A673 (cell line): ENCODE measurements at regions of chr17 and their contacts with region 1.

Region 1: GRCh38 chr17:17237026-17237799 is at the start of gene FLCN:
- DNase-seq: peak; percentile 91
- H3K4me3 ChIP-seq: peak within 1 kb of the TSS; percentile 91
- H3K27ac ChIP-seq: peak within 1 kb of the TSS; percentile 100
- H3K4me1 ChIP-seq: peaks cover 9% of the 10 kb centered on the region
- H3K27me3 ChIP-seq: no peaks in the 10 kb centered on the region
- CTCF ChIP-seq: no peak
- total RNA-seq, gene FLCN: 47.6 and 60.2 TPM in 2 replicates

Region 2: DNA sequence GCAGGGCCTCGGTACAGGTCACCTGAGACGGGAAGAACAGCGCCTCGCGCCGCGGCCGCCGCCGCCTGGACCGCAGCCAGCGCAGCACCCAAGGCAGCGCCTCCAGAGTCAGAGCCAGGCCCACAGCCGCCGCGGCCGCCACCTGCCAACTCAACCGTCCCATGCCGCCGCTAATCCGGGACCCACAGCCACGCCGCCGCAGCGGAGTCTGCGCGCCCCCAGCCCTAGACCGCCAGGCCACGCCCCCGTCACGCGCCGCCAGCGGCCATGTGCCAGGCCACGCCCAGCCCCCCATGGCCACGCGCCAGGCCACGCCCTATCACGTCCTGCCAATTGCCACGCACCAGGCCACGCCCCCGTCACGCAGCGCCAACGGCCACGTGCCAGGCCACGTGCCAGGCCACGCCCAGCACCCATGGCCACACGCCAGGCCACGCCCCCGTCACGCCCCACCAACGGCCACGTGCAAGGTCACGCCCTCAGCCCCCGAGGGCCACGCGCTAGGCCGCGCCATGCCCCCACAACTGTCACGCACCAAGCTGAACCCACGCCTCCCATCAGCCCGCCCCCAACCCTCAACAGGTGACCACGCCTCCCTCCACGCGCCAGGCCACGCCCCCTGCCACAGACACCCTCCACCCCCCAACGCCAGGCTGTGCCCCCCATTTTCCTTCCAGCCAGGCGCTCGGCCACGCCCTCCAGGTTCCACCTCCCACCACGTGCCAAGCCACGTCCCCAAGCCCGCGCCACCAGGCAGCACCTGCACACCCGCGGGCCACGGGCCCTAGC is 30.9 kb before region 1 on chr17 and contains the start of gene PLD6:
- CTCF ChIA-PET with region 1: no interaction called
- POLR2A ChIA-PET with region 1: no interaction called
- intact Hi-C with region 1: loop called (anchors 1 kb)
- DNase-seq: peak; percentile 89
- H3K4me3 ChIP-seq: peak within 1 kb of the TSS; percentile 72
- H3K27ac ChIP-seq: peak within 1 kb of the TSS; percentile 88
- H3K4me1 ChIP-seq: peaks cover 18% of the 10 kb centered on the region
- H3K27me3 ChIP-seq: no peaks in the 10 kb centered on the region
- CTCF ChIP-seq: no peak
- total RNA-seq, gene PLD6: 13.4 and 15.5 TPM in 2 replicates

Region 3: DNA sequence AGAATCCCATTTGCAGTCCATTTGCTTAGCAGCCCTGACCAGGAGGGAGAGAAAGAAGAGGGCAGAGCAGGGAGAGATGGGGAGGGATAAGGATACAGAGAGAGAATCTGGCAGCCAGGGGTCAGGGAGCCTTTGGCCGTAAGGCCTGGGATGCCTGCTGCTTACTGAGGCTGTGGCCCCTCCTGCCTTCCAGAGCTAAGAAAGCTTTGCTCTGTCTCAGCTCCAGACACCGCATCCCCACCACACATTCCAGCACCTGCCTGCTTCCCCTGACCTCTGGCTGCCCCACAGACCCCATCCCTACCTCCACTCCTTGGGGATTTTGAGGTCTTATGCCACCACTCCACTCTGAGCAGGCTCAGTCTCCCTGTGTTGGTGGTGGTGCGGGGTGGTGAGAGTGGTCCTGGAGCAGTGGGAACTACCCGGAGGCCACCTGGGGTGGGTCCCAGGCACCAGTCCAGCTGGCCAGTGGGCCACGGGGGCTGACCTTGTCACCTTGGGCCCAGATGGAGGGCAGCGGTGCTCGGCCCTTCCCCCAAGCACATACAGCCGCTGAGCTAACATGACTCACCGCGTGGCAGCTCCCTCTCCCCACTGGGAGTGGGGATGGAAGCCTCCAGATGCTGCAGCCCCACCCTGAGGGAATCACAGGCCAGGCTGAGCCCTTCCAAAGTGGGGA is 502.3 kb after region 1 on chr17:
- CTCF ChIA-PET with region 1: no interaction called
- POLR2A ChIA-PET with region 1: no interaction called
- intact Hi-C with region 1: no loop called
- DNase-seq: peak; percentile 37
- H3K4me3 ChIP-seq: no peak overlapping the region
- H3K27ac ChIP-seq: no peak overlapping the region
- H3K4me1 ChIP-seq: peaks cover 29% of the 10 kb centered on the region
- H3K27me3 ChIP-seq: no peaks in the 10 kb centered on the region
- CTCF ChIP-seq: no peak